IMR-90 (cell line): ENCODE measurements at regions of chr3 and their contacts with region 1.

Region 1: DNA sequence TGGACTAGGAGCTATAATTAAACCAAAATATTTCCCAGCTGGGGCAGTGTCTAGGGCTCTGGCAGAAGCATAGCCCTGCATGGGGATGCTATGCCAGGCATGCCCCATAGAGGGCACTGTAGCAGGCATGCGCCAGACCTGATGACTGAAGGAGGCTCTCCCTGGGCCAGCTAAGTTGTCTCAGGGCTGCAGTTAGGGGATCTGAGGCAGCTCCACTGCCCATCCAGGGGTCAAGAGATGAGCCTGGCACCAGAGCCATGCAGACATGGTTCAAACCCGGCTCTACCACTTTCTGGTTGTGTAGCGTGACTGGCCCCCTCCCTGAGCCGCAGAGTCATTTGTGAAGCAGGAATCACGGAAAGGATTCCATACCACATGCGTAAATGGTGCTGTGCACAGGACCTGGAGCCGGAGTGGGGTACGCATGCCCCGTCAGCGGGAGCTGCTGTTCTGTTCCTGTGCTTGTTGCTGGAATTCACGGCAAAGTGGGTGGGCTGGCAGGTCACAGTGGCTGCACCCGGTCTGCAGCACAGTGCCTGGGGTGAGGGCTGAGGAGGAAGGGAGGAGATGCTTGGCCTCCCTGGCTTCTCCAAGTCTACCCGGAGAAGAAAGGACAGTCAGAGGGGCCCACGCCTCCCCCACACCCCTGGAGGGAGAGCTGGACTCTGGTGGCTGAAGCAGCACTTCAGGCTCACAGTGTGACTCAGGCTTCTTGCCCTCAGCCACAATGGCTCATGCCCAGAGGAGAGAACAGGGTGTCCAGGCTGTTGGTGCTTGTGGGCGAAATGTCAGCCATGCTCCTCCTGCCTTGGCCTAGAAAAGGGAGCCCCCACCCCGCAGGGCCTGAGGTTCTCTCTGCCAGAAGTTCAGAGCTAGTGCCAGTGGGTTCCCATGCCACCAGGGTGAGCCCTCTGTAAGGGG is 43.1 kb downstream of the DNASE1L3 start:
- DNase-seq: peak; percentile 65
- ATAC-seq: peak; percentile 89
- H3K4me3 ChIP-seq: no peak overlapping the region
- H3K27ac ChIP-seq: no peak overlapping the region
- H3K4me1 ChIP-seq: peaks cover 21% of the 10 kb centered on the region
- H3K27me3 ChIP-seq: no peaks in the 10 kb centered on the region
- CTCF ChIP-seq: peak; percentile 80
- POLR2A ChIP-seq: no peak
- RAD21 ChIP-seq: no peak

Region 2: DNA sequence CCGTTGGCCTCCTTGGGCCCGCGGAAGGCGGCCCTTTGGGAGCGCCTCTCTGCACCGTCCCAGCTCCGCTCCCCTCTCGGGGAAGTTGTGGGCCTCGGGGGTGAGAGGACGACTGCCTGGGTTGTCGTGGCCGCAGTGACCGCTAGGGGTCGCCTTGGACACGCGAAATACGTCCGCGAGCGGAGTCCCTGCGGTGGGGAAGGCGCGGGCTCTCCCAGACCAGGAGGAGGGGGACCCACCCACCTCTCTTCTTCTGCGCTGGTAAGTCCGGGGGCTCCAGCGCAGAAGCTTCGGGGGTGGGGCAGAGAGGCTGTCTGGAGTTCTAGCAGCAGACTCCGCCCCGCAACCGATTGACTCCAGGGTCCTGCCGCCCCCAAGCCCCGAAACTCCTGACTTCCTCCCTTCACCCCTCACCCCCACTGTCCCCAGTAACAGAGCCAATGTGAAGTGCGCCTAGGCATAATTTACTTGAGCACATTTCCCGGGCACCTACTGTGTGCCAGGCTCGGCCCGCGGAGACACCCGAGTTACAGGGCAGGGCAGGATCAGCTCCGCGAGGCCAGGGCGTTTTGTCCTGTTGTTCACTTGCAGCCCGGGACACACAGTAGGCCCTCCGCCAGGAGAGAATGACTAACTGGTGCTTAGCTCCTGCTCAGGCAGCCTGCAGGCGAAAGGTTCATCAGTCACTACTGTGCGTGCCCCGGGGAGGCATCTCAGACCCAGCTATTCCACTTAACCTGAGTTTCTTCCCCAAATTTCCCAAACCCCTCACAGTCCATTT is 10.2 kb after region 1 on chr3:
- CTCF ChIA-PET with region 1: interaction called, 19 read pairs
- POLR2A ChIA-PET with region 1: no interaction called
- dilution Hi-C with region 1: no loop called
- in situ Hi-C with region 1: no loop called
- intact Hi-C with region 1: no loop called
- DNase-seq: peak; percentile 69
- ATAC-seq: peak; percentile 92
- H3K4me3 ChIP-seq: peak overlapping the region; percentile 24
- H3K27ac ChIP-seq: no peak overlapping the region
- H3K4me1 ChIP-seq: peaks cover 7% of the 10 kb centered on the region
- H3K27me3 ChIP-seq: peaks cover 8% of the 10 kb centered on the region; the same call in 1 of the 2 replicates
- CTCF ChIP-seq: peak; percentile 87
- POLR2A ChIP-seq: no peak
- RAD21 ChIP-seq: peak; percentile 71

Region 3: GRCh38 chr3:59406943-59407342 is 1239.3 kb after region 1 on chr3:
- CTCF ChIA-PET with region 1: no interaction called
- POLR2A ChIA-PET with region 1: no interaction called
- dilution Hi-C with region 1: no loop called
- in situ Hi-C with region 1: no loop called
- intact Hi-C with region 1: no loop called
- DNase-seq: no peak
- ATAC-seq: no peak
- H3K4me3 ChIP-seq: no peak overlapping the region
- H3K27ac ChIP-seq: no peak overlapping the region
- H3K4me1 ChIP-seq: peaks cover 7% of the 10 kb centered on the region
- H3K27me3 ChIP-seq: peaks cover 8% of the 10 kb centered on the region
- CTCF ChIP-seq: no peak
- POLR2A ChIP-seq: no peak
- RAD21 ChIP-seq: no peak